Transverse colon (tissue), 4 donors: ENCODE measurements at regions of chr2 and their contacts with region 1.

Region 1: DNA sequence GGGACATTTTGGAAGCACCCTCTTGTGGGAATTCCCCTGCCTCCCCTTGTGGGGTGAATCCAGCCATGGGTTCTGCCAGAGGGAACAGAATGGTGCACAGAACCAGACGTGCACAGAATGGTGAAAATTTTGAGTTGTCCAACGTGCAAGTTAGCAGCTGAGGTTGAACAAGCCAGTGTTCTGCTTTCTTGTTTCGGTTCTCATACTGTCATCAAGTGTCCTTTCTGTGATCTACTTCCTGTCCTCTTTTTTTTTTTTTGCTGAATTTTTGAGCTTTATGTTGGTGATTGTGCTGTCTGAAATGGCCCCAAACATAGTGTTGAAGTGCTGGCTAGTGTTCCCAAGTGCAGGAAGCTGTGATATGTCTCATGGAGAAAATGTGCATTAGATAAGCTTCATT is 21.5 kb upstream of the REEP1 start:
- DNase-seq: no peak
- H3K4me3 ChIP-seq: no peak overlapping the region
- H3K27ac ChIP-seq: no peak overlapping the region
- H3K4me1 ChIP-seq: peaks cover 4 to 15% (median 10%) of the 10 kb centered on the region in 4 donors
- H3K27me3 ChIP-seq: no peaks in the 10 kb centered on the region
- CTCF ChIP-seq: no peak
- EP300 ChIP-seq: no peak
- POLR2A ChIP-seq: no peak

Region 2: DNA sequence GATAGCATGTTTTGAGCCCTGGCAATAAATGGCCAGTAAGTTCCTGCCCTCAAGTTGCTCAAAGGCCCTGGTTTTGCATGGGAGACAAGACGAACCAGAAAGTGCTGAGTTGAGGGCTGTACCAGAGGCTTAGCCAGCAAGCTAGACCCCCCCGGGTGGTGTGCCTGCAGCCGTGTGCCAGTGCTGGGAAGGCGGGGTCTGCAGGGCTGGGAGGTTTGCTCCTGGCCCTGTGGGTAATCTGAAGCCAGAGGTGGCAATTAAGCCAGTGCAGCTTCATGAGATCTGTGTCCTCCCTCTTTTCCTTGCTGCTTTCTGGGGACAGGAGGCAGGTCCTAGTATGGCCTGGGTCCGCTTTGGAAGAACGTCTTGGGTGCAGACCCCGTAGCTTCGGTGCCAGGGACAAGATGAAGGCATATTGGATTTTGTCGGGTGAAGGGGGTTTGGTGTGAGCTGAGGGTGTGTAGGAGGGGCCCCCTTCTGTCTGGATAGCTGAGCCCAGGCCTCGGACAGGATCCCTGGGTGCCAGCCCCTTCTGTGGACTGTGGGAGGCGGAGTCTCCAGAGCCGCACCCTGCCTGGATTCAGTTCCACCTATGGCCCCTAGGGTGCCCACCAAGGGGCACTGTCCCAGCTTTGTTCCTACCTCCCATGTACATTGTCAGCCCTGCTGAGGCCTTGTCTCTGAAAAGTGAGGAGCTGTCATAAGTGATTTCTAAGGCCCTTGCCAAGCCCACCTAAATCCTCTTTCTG is 589.5 kb before region 1 on chr2:
- in situ Hi-C with region 1: no loop called
- intact Hi-C with region 1: no loop called
- DNase-seq: no peak
- H3K4me3 ChIP-seq: no peak overlapping the region
- H3K27ac ChIP-seq: peak overlapping the region in 2 of 4 donors; percentile 2 to 64
- H3K4me1 ChIP-seq: peaks cover 54 to 65% (median 57%) of the 10 kb centered on the region in 4 donors
- H3K27me3 ChIP-seq: no peaks in the 10 kb centered on the region
- CTCF ChIP-seq: peak in 2 of 5 experiments; percentile 12 to 15
- EP300 ChIP-seq: no peak
- POLR2A ChIP-seq: no peak

Region 3: GRCh38 chr2:86238354-86238753 is 120.6 kb before region 1 on chr2:
- in situ Hi-C with region 1: loop called in 2 of 4 experiments (anchors 10 to 25 kb)
- intact Hi-C with region 1: no loop called
- DNase-seq: no peak
- H3K4me3 ChIP-seq: no peak overlapping the region
- H3K27ac ChIP-seq: no peak overlapping the region
- H3K4me1 ChIP-seq: peaks cover 0 to 2% (median 1%) of the 10 kb centered on the region in 4 donors
- H3K27me3 ChIP-seq: no peaks in the 10 kb centered on the region
- CTCF ChIP-seq: no peak
- EP300 ChIP-seq: no peak
- POLR2A ChIP-seq: no peak

Region 4: DNA sequence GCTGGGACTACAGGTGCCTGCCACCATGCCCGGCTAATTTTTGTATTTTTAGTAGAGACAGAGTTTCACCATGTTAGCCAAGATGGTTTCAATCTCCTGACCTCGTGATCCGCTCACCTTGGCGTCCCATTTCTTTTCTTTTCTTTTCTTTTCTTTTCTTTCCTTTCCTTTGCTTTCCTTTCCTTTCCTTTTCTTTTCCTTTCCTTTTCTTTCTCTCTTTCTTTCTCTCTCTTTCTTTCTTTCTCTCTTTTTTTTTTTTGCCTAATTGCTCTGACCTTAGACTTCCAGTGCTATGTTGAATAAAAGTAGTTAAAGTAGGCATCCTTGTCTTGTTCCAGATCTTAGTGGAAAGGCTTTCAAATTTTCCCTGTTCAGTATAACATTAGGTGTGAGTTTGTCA is 19.5 kb after region 1 on chr2:
- in situ Hi-C with region 1: no loop called
- intact Hi-C with region 1: loop called (anchors 1 kb)
- DNase-seq: no peak
- H3K4me3 ChIP-seq: no peak overlapping the region
- H3K27ac ChIP-seq: no peak overlapping the region
- H3K4me1 ChIP-seq: no peaks in the 10 kb centered on the region
- H3K27me3 ChIP-seq: no peaks in the 10 kb centered on the region
- CTCF ChIP-seq: no peak
- EP300 ChIP-seq: no peak
- POLR2A ChIP-seq: no peak